Heart left ventricle (tissue), 16 donors: ENCODE measurements at regions of chr19 and their contacts with region 1.

Region 1: DNA sequence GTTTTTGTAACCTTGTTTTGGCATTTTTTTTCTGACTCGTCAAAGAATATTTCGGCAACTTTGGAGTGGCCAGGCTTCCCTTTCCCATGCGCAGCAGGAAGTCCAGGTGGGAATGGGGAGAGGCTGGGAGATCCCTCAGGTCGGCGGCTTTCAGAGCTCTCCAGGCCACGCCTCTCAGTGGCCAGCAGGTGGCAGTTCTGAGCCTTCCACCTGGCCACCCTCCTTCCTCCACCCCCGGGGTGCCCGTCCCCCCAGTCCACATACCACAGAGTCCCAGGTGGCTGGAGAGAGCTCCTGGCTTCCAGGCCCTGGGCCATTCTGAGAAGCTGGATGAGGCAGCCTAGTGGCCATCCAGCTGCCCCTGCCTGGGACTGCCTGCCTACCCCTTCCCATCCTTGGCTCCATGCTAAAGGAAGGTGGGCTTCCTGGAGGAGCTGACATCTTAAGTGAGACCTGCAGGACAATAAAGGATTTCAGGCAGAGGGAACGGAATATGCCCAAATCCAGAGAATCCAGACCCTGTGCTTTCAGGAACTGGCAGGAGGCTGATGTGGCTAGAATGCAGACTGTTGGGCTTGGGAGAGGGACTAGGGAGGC is 46.3 kb downstream of the CCNE1 start:
- DNase-seq: no peak
- ATAC-seq: peak in 3 of 4 donors; percentile 56 to 61 (median 60)
- H3K4me3 ChIP-seq: no peak overlapping the region
- H3K27ac ChIP-seq: no peak overlapping the region
- H3K4me1 ChIP-seq: no peaks in the 10 kb centered on the region
- H3K27me3 ChIP-seq: peaks cover 0 to 47% (median 4%) of the 10 kb centered on the region in 9 donors
- CTCF ChIP-seq: peak; percentile 22 to 61 (median 45)
- POLR2A ChIP-seq: no peak

Region 2: GRCh38 chr19:29908963-29909944 is 51.2 kb after region 1 on chr19:
- intact Hi-C with region 1: no loop called
- DNase-seq: no peak
- ATAC-seq: no peak
- H3K4me3 ChIP-seq: no peak overlapping the region
- H3K27ac ChIP-seq: no peak overlapping the region
- H3K4me1 ChIP-seq: no peaks in the 10 kb centered on the region
- H3K27me3 ChIP-seq: no peaks in the 10 kb centered on the region
- CTCF ChIP-seq: no peak
- POLR2A ChIP-seq: no peak

Region 3: DNA sequence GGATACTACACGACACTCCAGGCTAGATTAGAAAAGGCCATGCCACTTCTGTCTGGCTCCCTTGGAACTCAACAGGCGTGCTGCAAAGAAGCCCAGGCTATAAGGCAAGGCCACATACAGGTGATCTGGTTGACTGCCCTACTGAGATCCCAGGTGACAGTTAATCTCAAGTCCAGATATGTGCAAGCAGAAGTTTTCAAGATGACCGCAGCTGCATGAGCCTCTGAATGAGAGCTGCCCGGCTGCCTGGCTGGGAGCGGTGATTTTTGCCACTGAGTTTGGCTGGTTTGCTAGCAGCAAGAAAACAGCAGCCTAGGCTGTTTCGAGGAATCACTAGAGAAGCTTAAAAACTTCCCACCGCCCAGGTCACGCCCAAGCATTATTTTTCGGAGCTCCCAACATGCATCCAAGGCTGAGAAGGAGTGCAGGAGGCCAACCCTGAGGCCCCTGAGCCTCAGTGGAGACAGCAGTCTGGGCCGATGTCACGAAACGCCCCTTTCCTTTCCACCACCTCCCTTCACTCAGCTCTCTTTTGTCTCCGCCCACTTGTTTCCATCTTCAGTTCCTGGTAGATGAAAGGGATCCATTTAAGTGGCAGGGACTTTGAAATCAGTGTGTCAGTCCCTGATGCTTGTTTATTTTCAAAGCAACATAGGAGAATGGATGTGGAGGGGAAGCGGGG is 70.0 kb after region 1 on chr19:
- intact Hi-C with region 1: no loop called
- DNase-seq: no peak
- ATAC-seq: no peak
- H3K4me3 ChIP-seq: no peak overlapping the region
- H3K27ac ChIP-seq: no peak overlapping the region
- H3K4me1 ChIP-seq: no peaks in the 10 kb centered on the region
- H3K27me3 ChIP-seq: peaks cover 0 to 9% (median 0%) of the 10 kb centered on the region in 9 donors
- CTCF ChIP-seq: no peak
- POLR2A ChIP-seq: no peak

Region 4: DNA sequence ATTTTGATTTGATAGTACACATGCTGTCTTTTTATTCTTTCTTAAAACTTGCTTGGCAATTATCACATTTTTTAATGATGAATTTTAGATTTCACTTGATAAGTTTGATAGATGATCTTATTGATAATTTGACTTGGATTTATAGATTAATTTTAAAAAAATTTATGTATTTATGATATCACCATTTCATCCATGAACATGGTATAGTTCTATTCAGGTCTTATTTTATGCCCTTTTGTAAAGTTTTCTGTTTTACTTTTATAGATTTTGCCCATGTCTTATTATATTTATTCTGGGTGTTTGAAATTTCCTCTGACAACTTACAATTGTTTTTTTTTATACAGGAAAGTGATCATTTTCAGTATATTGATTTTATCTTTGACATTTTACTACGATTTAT is 553.6 kb after region 1 on chr19:
- intact Hi-C with region 1: loop called in 1 of 10 experiments (anchors 5 kb)
- DNase-seq: no peak
- ATAC-seq: no peak
- H3K4me3 ChIP-seq: no peak overlapping the region
- H3K27ac ChIP-seq: no peak overlapping the region
- H3K4me1 ChIP-seq: peaks cover 0 to 6% (median 0%) of the 10 kb centered on the region in 12 donors
- H3K27me3 ChIP-seq: peaks cover 0 to under 1% (median 0%) of the 10 kb centered on the region in 9 donors
- CTCF ChIP-seq: no peak
- POLR2A ChIP-seq: no peak